ENCODE measurements at regions of chr7 and their contacts with region 1.

Region 1: DNA sequence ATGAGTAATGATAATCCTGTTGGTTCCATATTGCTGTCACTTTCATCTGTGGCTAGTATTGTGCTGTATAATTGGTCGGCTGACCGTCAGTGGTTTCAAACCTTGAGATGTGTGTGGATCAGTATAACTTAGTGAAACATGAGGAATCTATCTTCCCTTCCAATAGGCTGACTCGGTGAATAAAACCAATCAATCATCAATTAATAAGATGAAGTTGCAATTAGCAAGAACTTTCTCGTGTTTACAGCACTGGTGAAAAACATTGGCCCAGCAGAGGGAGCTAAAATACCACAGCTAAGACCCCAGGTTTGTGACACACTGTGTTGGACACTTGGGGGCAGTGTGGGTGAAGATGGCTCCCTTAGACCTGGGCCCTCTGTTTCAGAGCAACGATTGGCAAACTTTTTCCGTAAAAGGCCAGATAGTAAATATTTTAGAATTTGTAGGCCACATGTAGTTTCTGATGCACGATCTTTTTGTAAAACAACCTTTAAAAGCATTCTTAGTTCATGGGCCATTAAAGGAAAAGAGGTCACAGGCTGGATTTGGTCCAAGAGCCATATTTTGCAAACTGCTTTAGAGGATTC is 47.8 kb downstream of the STRA8 start:
- DNase-seq: peak; percentile 87
- H3K4me3 ChIP-seq: no peak overlapping the region
- H3K27ac ChIP-seq: no peak overlapping the region
- H3K4me1 ChIP-seq: no peaks in the 10 kb centered on the region
- CTCF ChIP-seq: peak; percentile 100

Region 2: GRCh38 chr7:135265637-135266036 is 15.8 kb before region 1 on chr7:
- CTCF ChIA-PET with region 1: no interaction called
- POLR2A ChIA-PET with region 1: no interaction called
- intact Hi-C with region 1: no loop called
- DNase-seq: no peak
- H3K4me3 ChIP-seq: no peak overlapping the region
- H3K27ac ChIP-seq: no peak overlapping the region
- H3K4me1 ChIP-seq: no peaks in the 10 kb centered on the region
- CTCF ChIP-seq: no peak

Region 3: DNA sequence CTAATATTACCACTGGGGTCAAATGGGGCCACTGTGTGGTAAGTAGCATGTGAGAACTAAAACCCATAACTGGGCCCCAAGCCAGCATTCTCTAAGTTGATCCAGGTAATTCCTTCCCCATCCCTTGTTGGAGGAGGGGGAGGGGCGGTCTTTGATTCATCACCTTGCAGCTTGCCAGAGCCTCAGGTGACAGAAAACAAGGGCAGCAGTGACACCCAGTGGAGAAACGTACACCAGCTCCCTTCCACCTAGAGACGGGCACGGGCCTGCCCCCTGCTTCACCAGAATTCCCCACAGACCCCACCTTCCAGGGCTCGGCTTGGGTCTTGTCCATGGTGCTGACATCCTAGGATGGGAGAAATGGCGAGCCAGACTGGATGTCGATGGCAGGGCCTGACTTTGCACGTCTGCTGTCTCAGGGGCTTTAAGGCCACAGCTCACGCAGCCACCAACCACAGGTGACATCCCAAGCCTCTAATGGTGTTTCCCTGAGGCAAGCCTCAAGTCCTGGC is 54.2 kb after region 1 on chr7:
- CTCF ChIA-PET with region 1: interaction called, 3 read pairs
- POLR2A ChIA-PET with region 1: no interaction called
- intact Hi-C with region 1: loop called (anchors 1 kb)
- DNase-seq: peak; percentile 46
- H3K4me3 ChIP-seq: no peak overlapping the region
- H3K27ac ChIP-seq: no peak overlapping the region
- H3K4me1 ChIP-seq: no peaks in the 10 kb centered on the region
- CTCF ChIP-seq: peak; percentile 74

Region 4: DNA sequence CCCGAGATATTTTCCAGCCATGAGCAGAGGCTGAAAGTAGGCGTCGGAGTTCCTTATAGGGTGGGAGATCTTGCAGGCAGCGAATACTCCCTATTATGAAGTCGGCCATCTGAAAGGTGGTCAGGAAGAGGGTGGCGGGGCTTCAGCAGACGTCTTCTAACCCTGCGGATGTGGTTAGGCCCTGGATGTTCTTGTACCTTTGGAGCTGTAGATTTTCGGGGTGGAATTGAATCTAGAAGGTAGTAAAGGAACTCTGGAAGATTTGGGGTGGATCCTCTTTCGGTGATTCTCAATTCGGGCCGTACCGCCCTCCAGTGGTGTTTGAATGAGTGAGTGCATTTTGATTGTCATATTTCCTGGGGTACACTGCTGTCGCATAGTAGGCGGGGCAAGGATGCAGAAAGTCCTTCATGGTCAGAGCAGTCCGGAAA is 276.9 kb after region 1 on chr7:
- CTCF ChIA-PET with region 1: no interaction called
- POLR2A ChIA-PET with region 1: no interaction called
- intact Hi-C with region 1: loop called (anchors 2 kb)
- DNase-seq: peak; percentile 85
- H3K4me3 ChIP-seq: peak overlapping the region; percentile 97
- H3K27ac ChIP-seq: peak overlapping the region; percentile 92
- H3K4me1 ChIP-seq: peaks cover 41% of the 10 kb centered on the region
- CTCF ChIP-seq: peak; percentile 89

Region 5: GRCh38 chr7:135645296-135645904 is 363.9 kb after region 1 on chr7:
- CTCF ChIA-PET with region 1: no interaction called
- POLR2A ChIA-PET with region 1: interaction called, 3 read pairs
- intact Hi-C with region 1: loop called (anchors 5 kb)
- DNase-seq: peak; percentile 66
- H3K4me3 ChIP-seq: no peak overlapping the region
- H3K27ac ChIP-seq: no peak overlapping the region
- H3K4me1 ChIP-seq: no peaks in the 10 kb centered on the region
- CTCF ChIP-seq: peak; percentile 84

Region 6: DNA sequence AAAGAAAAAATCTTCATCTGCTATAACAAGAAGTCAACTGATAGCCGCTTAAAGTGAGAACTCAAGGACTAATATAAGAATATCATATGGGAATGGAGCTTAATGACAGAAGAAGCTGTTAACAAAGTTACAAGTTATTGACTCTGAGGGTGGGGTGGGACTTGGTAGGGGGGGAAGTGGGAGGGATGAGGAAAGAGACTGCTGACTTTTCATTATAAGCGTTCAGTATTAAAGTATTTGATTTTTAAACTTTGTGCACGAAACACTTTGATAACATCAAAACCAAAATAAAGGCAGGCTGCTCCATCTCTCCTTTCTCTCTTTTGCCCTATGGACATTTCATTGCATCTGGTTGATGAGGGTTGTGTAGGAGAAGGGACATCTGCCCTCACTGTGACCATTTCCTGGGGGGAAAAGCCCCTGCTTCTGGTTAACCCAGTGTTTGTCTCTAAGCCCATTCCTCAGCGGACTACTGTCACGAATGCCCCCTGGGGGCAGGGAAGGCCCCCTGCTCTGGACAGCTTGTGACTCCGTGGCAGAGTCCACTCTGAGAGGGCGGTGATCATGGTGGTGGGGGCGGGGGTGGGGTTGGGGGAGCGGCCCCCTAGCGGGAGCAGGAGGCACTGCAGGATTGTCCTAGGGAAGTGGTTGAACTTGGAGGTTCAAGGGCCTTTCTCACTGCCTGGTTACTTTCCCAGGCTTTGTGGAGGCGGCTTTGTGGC is 429.1 kb after region 1 on chr7:
- CTCF ChIA-PET with region 1: no interaction called
- POLR2A ChIA-PET with region 1: no interaction called
- intact Hi-C with region 1: loop called (anchors 5 kb)
- DNase-seq: peak; percentile 27
- H3K4me3 ChIP-seq: no peak overlapping the region
- H3K27ac ChIP-seq: no peak overlapping the region
- H3K4me1 ChIP-seq: no peaks in the 10 kb centered on the region
- CTCF ChIP-seq: peak; percentile 70

Region 7: DNA sequence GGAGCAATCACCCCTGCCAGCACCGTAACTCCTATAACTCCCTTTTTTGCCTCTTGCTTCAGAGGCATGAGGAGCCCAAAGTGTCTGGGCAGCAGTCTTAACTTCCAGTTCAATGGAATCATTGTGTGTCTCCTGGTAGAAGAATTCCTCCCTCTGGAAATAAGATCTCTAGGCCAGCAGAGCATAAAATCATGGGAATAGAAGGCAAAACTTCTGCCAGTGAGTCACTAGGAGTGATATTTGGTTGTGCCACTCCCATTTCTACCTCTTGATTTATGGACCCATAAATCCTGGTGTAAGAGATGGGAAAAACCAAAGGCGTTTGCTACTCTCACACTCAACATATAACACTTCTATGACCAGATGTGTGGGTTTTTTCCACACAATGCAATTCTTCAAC is 572.0 kb after region 1 on chr7:
- CTCF ChIA-PET with region 1: no interaction called
- POLR2A ChIA-PET with region 1: no interaction called
- intact Hi-C with region 1: no loop called
- DNase-seq: no peak
- H3K4me3 ChIP-seq: no peak overlapping the region
- H3K27ac ChIP-seq: no peak overlapping the region
- H3K4me1 ChIP-seq: peaks cover 6% of the 10 kb centered on the region
- CTCF ChIP-seq: no peak